PC-9 (cell line): ENCODE measurements at regions of chr5 and their contacts with region 1.

Region 1: DNA sequence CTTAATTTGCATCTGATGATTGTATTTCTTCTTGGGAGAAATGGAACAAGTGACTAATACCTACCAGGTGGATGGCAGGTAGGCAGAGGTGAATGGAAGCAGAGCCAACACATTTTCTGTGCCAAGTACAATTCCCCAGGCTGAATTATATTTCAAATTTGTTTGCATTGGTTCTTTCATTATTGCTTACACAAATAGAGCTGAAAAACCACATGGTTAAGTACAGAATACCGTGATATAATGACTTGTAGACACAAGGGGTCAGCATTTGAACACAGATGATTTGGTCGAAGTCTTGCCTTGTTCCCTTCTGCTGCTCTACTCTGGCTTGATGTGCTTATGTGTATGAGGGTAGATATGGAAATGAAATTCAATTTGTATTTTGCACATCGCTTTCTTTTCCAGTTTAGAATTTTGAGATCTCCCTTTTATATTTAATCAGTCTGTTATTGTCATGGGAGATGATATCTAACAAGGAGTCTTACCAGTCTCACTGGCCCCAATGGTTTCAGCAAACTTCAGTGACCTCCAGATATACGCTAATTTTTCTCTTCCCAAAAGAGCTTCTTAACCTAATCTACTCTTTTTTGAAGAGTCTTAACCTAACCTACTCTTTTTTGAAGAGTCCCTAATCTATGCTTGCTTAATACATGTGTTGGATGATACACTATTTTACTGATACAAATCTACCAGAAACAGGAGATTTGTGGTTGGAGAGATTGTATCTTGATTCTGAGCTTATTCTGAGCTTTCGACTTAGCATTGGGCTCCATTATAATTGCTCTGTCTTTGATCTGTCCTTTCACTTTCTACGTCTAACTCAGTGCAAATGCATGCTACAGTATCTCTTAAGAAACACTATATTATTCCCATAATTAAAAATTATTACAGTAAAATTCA is 88.1 kb downstream of the PCSK1 start:
- DNase-seq: peak in 1 of 2 experiments; percentile 59
- H3K4me3 ChIP-seq: no peak overlapping the region
- H3K27ac ChIP-seq: no peak overlapping the region
- H3K4me1 ChIP-seq: no peaks in the 10 kb centered on the region
- H3K27me3 ChIP-seq: no peaks in the 10 kb centered on the region
- CTCF ChIP-seq: peak; percentile 70

Region 2: DNA sequence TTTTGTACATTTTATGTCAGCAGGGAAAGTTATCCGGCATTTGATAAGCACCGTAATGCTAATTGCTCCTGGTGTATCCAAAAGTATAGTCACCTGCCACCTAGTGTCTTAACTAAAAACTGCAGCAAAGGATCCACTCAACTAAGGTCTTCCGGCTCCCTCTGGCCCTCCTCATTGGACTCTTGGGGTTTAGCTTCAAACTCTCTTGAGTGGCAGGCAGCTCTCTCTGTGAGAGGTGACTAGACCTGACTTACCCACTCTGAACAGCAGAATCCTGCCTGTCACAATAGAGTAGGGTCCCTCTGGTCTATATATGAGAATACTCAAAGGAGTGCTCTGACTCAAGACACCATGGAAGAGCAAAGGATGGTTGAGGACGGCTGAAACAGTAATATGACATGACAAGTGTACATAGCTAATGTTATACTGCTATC is 256.9 kb after region 1 on chr5:
- CTCF ChIA-PET with region 1: interaction called, 3 read pairs
- POLR2A ChIA-PET with region 1: no interaction called
- intact Hi-C with region 1: loop called (anchors 1 kb)
- DNase-seq: peak; percentile 32 to 38
- H3K4me3 ChIP-seq: no peak overlapping the region
- H3K27ac ChIP-seq: no peak overlapping the region
- H3K4me1 ChIP-seq: no peaks in the 10 kb centered on the region
- H3K27me3 ChIP-seq: no peaks in the 10 kb centered on the region
- CTCF ChIP-seq: peak; percentile 89

Region 3: GRCh38 chr5:96687812-96688453 is 343.0 kb after region 1 on chr5:
- CTCF ChIA-PET with region 1: no interaction called
- POLR2A ChIA-PET with region 1: no interaction called
- intact Hi-C with region 1: loop called (anchors 10 kb)
- DNase-seq: peak in 1 of 2 experiments; percentile 39
- H3K4me3 ChIP-seq: no peak overlapping the region; the same call in 1 of the 2 replicates
- H3K27ac ChIP-seq: peak overlapping the region; percentile 10
- H3K4me1 ChIP-seq: peaks cover 9% of the 10 kb centered on the region; the same call in 1 of the 2 replicates
- H3K27me3 ChIP-seq: no peaks in the 10 kb centered on the region
- CTCF ChIP-seq: peak; percentile 82

Region 4: DNA sequence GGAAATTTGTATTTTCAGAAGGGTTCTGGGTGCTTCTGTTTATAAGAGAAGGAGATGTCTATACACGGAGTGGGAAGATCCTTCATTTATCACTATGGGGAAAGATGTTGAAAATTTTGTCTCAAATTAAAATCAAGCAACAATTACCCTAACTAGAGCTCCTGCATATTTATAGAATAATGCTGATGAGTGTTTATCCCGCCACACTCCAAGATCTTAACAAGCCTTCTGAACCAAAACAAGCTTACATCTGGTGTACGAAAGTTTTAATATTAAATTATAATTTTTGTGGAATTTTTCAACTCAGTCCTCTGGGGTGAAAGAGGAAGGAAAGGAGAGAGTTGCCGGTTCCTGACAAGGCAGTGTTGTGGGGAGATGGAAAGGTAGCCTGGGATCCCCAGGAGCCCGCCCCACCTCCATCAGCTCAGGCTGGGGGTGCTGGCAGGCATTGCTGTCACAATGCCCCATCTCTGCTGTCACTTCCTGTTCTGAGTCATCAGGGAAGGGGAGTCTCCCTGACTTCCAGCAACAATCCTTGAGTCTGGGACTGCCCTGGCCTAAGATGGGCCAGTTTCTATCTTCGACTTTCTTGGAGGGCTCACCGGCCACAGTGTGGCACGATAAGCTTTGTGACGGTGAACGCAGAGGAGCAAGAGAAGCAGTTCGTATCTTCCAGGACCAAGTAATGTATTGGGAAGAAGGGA is 398.3 kb after region 1 on chr5:
- CTCF ChIA-PET with region 1: no interaction called
- POLR2A ChIA-PET with region 1: no interaction called
- intact Hi-C with region 1: loop called (anchors 10 kb)
- DNase-seq: no peak
- H3K4me3 ChIP-seq: no peak overlapping the region
- H3K27ac ChIP-seq: no peak overlapping the region
- H3K4me1 ChIP-seq: no peaks in the 10 kb centered on the region
- H3K27me3 ChIP-seq: no peaks in the 10 kb centered on the region
- CTCF ChIP-seq: no peak